Esophagus squamous epithelium (tissue), 5 donors: ENCODE measurements at regions of chr22 and their contacts with region 1.

Region 1: DNA sequence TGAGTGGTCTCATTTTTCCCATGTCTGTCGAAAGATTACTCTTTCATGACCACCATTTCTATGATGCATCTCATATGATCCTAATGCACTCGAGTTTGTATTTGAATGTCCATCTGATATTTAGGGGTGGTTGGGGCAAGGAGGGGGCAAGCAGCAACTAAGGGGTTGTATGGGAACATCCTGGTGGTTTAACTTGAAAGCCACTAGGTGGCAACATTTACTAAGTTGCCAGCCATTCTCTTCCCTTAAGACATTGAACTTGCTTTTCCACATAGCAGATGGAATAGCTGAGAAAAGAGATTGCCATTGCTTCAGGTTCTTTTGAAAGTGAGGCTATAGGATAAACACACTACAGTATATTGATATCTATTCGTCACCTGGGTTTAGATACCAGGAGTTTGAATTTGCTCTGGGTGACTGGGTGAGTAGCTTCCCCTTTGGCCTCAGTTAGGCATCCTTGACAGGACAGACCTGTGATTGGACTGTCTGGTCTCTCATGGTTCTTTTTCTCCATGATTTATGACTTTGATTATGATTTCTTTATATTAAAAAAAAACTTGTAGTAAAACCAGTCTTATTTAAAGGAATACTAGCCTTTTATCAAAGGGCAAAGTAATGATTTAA is 32.4 kb downstream of the NF2 start:
- DNase-seq: no peak
- H3K4me3 ChIP-seq: no peak overlapping the region
- H3K27ac ChIP-seq: no peak overlapping the region
- H3K4me1 ChIP-seq: peaks cover 0 to 25% (median 0%) of the 10 kb centered on the region in 3 donors
- H3K27me3 ChIP-seq: no peaks in the 10 kb centered on the region
- CTCF ChIP-seq: peak in 5 of 6 experiments; percentile 53 to 72 (median 55)
- POLR2A ChIP-seq: no peak

Region 2: GRCh38 chr22:29710922-29711593 is 75.2 kb after region 1 on chr22:
- intact Hi-C with region 1: no loop called
- DNase-seq: no peak
- H3K4me3 ChIP-seq: no peak overlapping the region
- H3K27ac ChIP-seq: no peak overlapping the region
- H3K4me1 ChIP-seq: no peaks in the 10 kb centered on the region
- H3K27me3 ChIP-seq: peaks cover 0 to 97% (median 0%) of the 10 kb centered on the region in 4 donors
- CTCF ChIP-seq: no peak
- POLR2A ChIP-seq: no peak

Region 3: DNA sequence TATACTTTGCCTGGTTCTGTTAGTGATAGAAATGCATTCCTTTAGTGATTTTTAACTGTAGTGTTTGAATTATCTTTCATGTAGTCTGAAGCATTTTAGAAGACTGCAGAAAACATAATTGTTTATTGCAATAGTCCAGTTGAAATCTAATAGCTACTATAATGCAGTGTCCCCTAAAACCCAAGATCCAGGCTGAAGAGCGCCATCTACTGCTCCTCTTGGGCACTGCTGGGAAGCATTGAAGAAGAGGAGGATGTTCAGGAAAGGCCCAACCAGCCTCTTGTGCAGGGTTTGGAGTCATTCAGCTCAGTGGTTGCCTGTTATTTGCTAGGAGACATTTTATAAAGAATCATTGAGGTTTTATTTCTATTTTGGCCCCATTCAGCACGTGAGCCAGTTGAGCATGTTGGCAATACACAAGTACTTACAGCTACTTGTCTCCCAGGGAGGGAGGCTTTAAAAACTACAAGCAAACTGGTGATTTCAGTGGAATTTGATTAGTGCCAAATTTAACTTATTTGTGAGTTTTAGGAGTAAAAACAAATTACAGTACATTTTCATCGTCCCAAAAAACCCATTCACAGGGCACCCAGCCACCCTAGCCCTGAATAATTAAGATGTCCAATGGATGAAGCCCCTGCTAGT is 369.5 kb after region 1 on chr22:
- intact Hi-C with region 1: loop called (anchors 10 kb)
- DNase-seq: no peak
- H3K4me3 ChIP-seq: no peak overlapping the region
- H3K27ac ChIP-seq: no peak overlapping the region
- H3K4me1 ChIP-seq: peaks cover 0 to 8% (median 0%) of the 10 kb centered on the region in 3 donors
- H3K27me3 ChIP-seq: no peaks in the 10 kb centered on the region
- CTCF ChIP-seq: peak; percentile 64 to 94 (median 91)
- POLR2A ChIP-seq: no peak

Region 4: GRCh38 chr22:30094804-30095203 is 459.0 kb after region 1 on chr22:
- intact Hi-C with region 1: loop called (anchors 10 kb)
- DNase-seq: no peak
- H3K4me3 ChIP-seq: no peak overlapping the region
- H3K27ac ChIP-seq: no peak overlapping the region
- H3K4me1 ChIP-seq: no peaks in the 10 kb centered on the region
- H3K27me3 ChIP-seq: peaks cover 0 to 20% (median 0%) of the 10 kb centered on the region in 4 donors
- CTCF ChIP-seq: no peak
- POLR2A ChIP-seq: no peak